ENCODE measurements at regions of chr15 and their contacts with region 1.

Region 1: GRCh38 chr15:93018580-93018979 is 70.4 kb downstream of the RGMA start:
- DNase-seq: no peak
- H3K4me3 ChIP-seq: no peak overlapping the region
- H3K27ac ChIP-seq: peak overlapping the region; percentile 10 to 45
- H3K4me1 ChIP-seq: no peaks in the 10 kb centered on the region
- H3K27me3 ChIP-seq: no peaks in the 10 kb centered on the region
- CTCF ChIP-seq: no peak
- POLR2A ChIP-seq: no peak

Region 2: DNA sequence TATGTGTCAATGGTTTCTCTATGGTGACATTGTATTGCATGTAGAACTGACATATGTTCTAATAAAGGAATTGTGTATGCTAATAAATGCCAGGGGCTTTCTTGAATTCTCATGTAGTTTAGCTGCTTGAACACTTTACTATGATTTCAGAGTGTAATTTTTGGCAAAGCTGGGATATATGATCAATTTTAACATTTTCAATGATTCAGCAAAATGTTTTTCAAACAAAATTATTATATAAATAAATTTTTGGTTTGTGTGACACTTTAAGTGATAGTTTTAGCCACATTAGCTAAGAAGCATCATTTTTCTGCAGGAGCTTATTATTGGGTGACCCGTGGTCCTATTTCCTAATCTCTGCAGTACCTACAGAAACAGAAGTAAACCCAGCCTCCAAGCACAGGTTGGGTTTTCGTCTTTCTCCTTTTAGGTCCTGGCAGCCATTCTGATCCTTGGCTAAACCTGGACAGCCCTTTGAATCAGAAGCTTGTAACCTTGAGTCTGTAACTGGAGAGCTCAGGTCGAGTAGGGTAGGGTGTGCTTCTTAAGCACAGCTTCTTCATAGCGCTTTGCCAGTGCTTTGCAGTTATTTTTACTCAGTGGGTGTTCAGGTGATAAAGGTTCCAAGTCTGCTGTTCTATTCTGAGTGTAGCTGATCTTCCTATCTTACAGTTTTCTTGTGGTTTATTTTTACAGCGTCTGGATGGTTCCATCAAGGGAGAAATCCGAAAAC is 44.2 kb before region 1 on chr15:
- intact Hi-C with region 1: loop called (anchors 2 kb)
- DNase-seq: no peak
- H3K4me3 ChIP-seq: no peak overlapping the region
- H3K27ac ChIP-seq: no peak overlapping the region
- H3K4me1 ChIP-seq: no peaks in the 10 kb centered on the region
- H3K27me3 ChIP-seq: no peaks in the 10 kb centered on the region
- CTCF ChIP-seq: no peak
- POLR2A ChIP-seq: no peak

Measured in breast epithelium (tissue), 4 donors.